ENCODE measurements at regions of chr12 and their contacts with region 1.

Region 1: DNA sequence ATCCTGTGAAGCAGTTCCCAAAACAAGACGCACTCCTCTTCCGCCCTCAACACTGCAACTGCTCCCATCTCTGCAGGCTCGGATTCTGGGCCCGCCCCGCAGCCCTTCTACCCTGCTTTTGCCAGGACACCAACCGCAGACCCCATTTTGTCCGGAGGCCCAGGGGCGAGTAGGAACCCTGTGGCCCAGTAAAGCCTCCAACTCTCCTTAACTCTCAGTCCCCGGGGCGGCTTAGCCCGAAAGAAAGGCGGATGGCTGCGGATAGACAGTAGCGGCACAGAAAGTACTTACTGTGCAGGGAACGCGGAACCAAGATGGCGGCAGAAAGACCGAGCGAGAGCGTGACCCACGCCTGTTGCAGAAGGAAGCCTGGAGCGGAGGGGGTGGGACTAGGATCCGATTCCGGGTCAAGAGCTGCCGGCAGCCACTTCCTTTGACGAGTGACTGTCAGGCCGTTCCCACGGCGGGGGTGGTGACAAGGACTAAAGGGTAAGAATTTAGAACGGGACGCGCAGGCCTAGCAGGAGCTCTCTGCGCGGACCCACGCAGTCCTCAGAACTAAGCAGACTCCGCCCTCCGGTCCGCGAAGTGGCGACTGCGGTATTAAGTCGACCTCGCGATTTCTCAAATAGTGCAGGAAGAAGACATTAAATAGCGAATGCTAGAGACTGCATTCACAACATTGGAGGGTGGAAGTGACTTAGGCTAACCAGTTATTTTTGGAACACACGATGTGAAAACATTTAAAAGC is at the start of gene NACA:
- DNase-seq: peak; percentile 99
- ATAC-seq: peak; percentile 96
- H3K4me3 Mint-ChIP-seq: peak within 1 kb of the TSS; percentile 97
- H3K27ac Mint-ChIP-seq: peak within 1 kb of the TSS; percentile 99
- H3K4me1 Mint-ChIP-seq: peaks cover 44% of the 10 kb centered on the region
- H3K27me3 Mint-ChIP-seq: no peaks in the 10 kb centered on the region
- total RNA-seq, gene NACA: 1,215 to 1,231 TPM

Region 2: GRCh38 chr12:55829967-55830600 is 895.1 kb before region 1 on chr12:
- CTCF ChIA-PET with region 1: no interaction called
- POLR2A ChIA-PET with region 1: no interaction called
- intact Hi-C with region 1: loop called in 1 of 2 experiments (anchors 1 kb)
- DNase-seq: peak; percentile 52
- ATAC-seq: peak; percentile 37
- H3K4me3 Mint-ChIP-seq: peak overlapping the region; percentile 99
- H3K27ac Mint-ChIP-seq: peak overlapping the region; percentile 97
- H3K4me1 Mint-ChIP-seq: peaks cover 46% of the 10 kb centered on the region
- H3K27me3 Mint-ChIP-seq: no peaks in the 10 kb centered on the region

Region 3: GRCh38 chr12:56630160-56630632 is 95.0 kb before region 1 on chr12 and contains the start of gene BAZ2A:
- CTCF ChIA-PET with region 1: no interaction called
- POLR2A ChIA-PET with region 1: interaction called, 8 read pairs
- intact Hi-C with region 1: loop called in 1 of 2 experiments (anchors 1 kb)
- DNase-seq: peak; percentile 94
- ATAC-seq: peak; percentile 69
- H3K4me3 Mint-ChIP-seq: peak within 1 kb of the TSS; percentile 96
- H3K27ac Mint-ChIP-seq: peak within 1 kb of the TSS; percentile 93
- H3K4me1 Mint-ChIP-seq: peaks cover 75% of the 10 kb centered on the region
- H3K27me3 Mint-ChIP-seq: no peaks in the 10 kb centered on the region
- total RNA-seq, gene BAZ2A: 79.4 to 129 TPM

Region 4: DNA sequence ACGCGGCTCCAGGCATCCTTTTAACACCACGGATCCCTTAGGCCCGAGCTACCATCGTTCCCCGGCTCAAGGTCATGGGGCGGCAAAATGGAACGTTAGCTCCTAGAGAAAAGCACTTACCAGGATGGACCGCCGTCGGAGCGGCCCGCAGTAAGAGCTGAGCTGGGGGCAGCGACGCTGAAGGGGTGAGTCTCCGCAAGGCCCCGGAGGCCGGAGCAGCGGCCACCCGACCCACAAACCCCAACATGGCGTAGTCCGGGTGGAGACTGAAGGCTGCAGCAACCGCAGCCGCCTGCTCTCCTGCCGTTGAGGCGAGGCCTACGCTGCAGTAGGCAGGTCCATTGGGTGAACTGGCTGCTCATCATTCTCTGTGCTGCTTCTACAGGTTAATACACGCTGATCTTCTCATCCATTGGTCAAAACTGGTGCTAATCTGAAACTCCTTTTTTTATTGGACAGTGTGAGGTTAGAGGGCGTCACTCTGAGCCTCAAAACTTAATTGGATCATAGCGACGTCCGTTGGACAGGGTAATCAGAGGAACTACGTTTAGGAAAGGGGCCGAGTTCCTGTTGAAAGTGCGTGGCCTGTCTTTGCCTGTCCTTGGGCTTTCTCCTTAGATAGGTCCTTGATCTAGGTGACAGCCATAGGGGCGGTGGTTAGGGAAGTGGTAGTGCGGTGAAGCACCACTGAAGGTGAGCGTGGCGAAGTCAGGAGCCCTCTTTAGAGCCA is 79.3 kb before region 1 on chr12 and contains the start of gene ATP5F1B:
- CTCF ChIA-PET with region 1: interaction called, 5 read pairs
- POLR2A ChIA-PET with region 1: interaction called, 5 read pairs
- intact Hi-C with region 1: loop called (anchors 1 to 2 kb)
- DNase-seq: peak; percentile 95
- ATAC-seq: peak; percentile 99
- H3K4me3 Mint-ChIP-seq: peak within 1 kb of the TSS; percentile 95
- H3K27ac Mint-ChIP-seq: peak within 1 kb of the TSS; percentile 95
- H3K4me1 Mint-ChIP-seq: peaks cover 30% of the 10 kb centered on the region
- H3K27me3 Mint-ChIP-seq: no peaks in the 10 kb centered on the region
- total RNA-seq, gene ATP5F1B: 756 to 818 TPM

Region 5: GRCh38 chr12:57078519-57079404 is 353.6 kb after region 1 on chr12 and contains the start of gene NEMP1:
- CTCF ChIA-PET with region 1: interaction called, 3 read pairs
- POLR2A ChIA-PET with region 1: interaction called, 4 read pairs
- intact Hi-C with region 1: loop called in 1 of 2 experiments (anchors 1 kb)
- DNase-seq: peak; percentile 97
- ATAC-seq: peak; percentile 95
- H3K4me3 Mint-ChIP-seq: peak within 1 kb of the TSS; percentile 97
- H3K27ac Mint-ChIP-seq: peak within 1 kb of the TSS; percentile 94
- H3K4me1 Mint-ChIP-seq: peaks cover 29% of the 10 kb centered on the region
- H3K27me3 Mint-ChIP-seq: no peaks in the 10 kb centered on the region
- total RNA-seq, gene NEMP1: 79.0 to 81.1 TPM

Region 6: GRCh38 chr12:57487597-57488401 is 762.7 kb after region 1 on chr12 and contains the start of gene MARS1:
- CTCF ChIA-PET with region 1: no interaction called
- POLR2A ChIA-PET with region 1: no interaction called
- intact Hi-C with region 1: loop called in 1 of 2 experiments (anchors 1 kb)
- DNase-seq: peak; percentile 96
- ATAC-seq: peak; percentile 98
- H3K4me3 Mint-ChIP-seq: peak within 1 kb of the TSS; percentile 100
- H3K27ac Mint-ChIP-seq: peak within 1 kb of the TSS; percentile 94
- H3K4me1 Mint-ChIP-seq: peaks cover 35% of the 10 kb centered on the region
- H3K27me3 Mint-ChIP-seq: no peaks in the 10 kb centered on the region
- total RNA-seq, gene MARS1: 389 to 583 TPM